Pancreas (tissue), 10 donors: ENCODE measurements at regions of chr16 and their contacts with region 1.

Region 1: GRCh38 chr16:77584205-77584859 is 138.0 kb upstream of the NUDT7 start:
- DNase-seq: peak in 2 of 6 donors; percentile 5 to 59
- ATAC-seq: peak in 3 of 4 donors; percentile 79 to 87 (median 81)
- H3K4me3 ChIP-seq: no peak overlapping the region
- H3K27ac ChIP-seq: no peak overlapping the region
- H3K4me1 ChIP-seq: no peaks in the 10 kb centered on the region
- H3K27me3 ChIP-seq: no peaks in the 10 kb centered on the region
- CTCF ChIP-seq: peak; percentile 64 to 88 (median 74)

Region 2: DNA sequence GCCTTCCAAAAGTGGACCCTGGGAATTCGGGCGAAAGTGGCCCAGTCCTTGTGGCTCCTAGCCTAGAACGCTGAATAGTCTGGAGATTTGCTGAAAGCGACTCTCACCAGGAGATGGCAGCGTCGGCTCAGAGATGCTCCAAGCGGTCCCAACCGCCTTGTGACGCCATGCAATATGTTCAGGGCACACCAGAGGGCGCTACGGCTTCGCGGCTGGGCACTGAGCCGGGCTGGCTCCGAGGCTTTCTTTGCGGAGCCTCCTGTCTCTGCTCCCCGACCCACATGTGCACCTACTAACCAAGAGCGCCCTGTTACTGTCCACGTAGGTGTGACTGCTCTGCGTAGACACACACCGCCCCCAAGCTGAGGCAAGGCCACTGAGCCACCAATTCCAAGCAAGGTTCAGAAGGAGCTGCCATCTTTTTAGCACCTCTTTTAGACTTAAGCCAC is 348.2 kb before region 1 on chr16:
- intact Hi-C with region 1: loop called (anchors 2 to 5 kb)
- DNase-seq: peak; percentile 75 to 97 (median 90)
- ATAC-seq: peak; percentile 97 to 100 (median 100)
- H3K4me3 ChIP-seq: no peak overlapping the region
- H3K27ac ChIP-seq: no peak overlapping the region
- H3K4me1 ChIP-seq: no peaks in the 10 kb centered on the region
- H3K27me3 ChIP-seq: peaks cover 0 to 8% (median 0%) of the 10 kb centered on the region in 4 donors
- CTCF ChIP-seq: peak; percentile 97 to 99 (median 99)